Transverse colon (tissue), 4 donors: ENCODE measurements at regions of chr2 and their contacts with region 1.

Region 1: GRCh38 chr2:7685342-7686015 is 768.3 kb downstream of the RNF144A start:
- DNase-seq: no peak
- H3K4me3 ChIP-seq: no peak overlapping the region
- H3K27ac ChIP-seq: no peak overlapping the region
- H3K4me1 ChIP-seq: no peaks in the 10 kb centered on the region
- H3K27me3 ChIP-seq: no peaks in the 10 kb centered on the region
- CTCF ChIP-seq: no peak
- EP300 ChIP-seq: no peak
- POLR2A ChIP-seq: no peak

Region 2: GRCh38 chr2:6865346-6866274 is 819.9 kb before region 1 on chr2 and contains the start of gene CMPK2:
- in situ Hi-C with region 1: no loop called
- intact Hi-C with region 1: loop called (anchors 5 kb)
- DNase-seq: peak; percentile 85
- H3K4me3 ChIP-seq: peak within 1 kb of the TSS; percentile 65 to 98 (median 71)
- H3K27ac ChIP-seq: peak within 1 kb of the TSS; percentile 86 to 95 (median 91)
- H3K4me1 ChIP-seq: peaks cover 4 to 19% (median 12%) of the 10 kb centered on the region in 4 donors
- H3K27me3 ChIP-seq: no peaks in the 10 kb centered on the region
- CTCF ChIP-seq: no peak
- EP300 ChIP-seq: no peak
- POLR2A ChIP-seq: peak; percentile 18
- total RNA-seq, gene CMPK2: 4.9 to 22.9 (median 11.8) TPM

Region 3: GRCh38 chr2:7665880-7666279 is 19.6 kb before region 1 on chr2:
- in situ Hi-C with region 1: no loop called
- intact Hi-C with region 1: loop called (anchors 1 kb)
- DNase-seq: no peak
- H3K4me3 ChIP-seq: no peak overlapping the region
- H3K27ac ChIP-seq: no peak overlapping the region
- H3K4me1 ChIP-seq: no peaks in the 10 kb centered on the region
- H3K27me3 ChIP-seq: no peaks in the 10 kb centered on the region
- CTCF ChIP-seq: no peak
- EP300 ChIP-seq: no peak
- POLR2A ChIP-seq: no peak